ENCODE measurements at regions of chr19 and their contacts with region 1.

Region 1: GRCh38 chr19:40750059-40750873 is at the start of gene ACTMAP:
- DNase-seq: peak; percentile 99
- ATAC-seq: peak; percentile 88
- H3K4me3 ChIP-seq: peak within 1 kb of the TSS; percentile 95
- H3K27ac ChIP-seq: peak within 1 kb of the TSS; percentile 93
- H3K4me1 ChIP-seq: peaks cover 28% of the 10 kb centered on the region
- H3K27me3 ChIP-seq: no peaks in the 10 kb centered on the region
- CTCF ChIP-seq: no peak
- total RNA-seq, gene ACTMAP: 0.40 and 0.86 TPM in 2 replicates

Region 2: GRCh38 chr19:40716655-40717324 is 33.5 kb before region 1 on chr19 and contains the starts of genes COQ8B and ITPKC:
- CTCF ChIA-PET with region 1: interaction called, 6 read pairs
- POLR2A ChIA-PET with region 1: no interaction called
- intact Hi-C with region 1: loop called (anchors 2 kb)
- DNase-seq: peak; percentile 97
- ATAC-seq: peak; percentile 37
- H3K4me3 ChIP-seq: peak within 1 kb of the TSS; percentile 99
- H3K27ac ChIP-seq: peak within 1 kb of the TSS; percentile 100
- H3K4me1 ChIP-seq: peaks cover 27% of the 10 kb centered on the region
- H3K27me3 ChIP-seq: no peaks in the 10 kb centered on the region
- CTCF ChIP-seq: no peak
- total RNA-seq, gene COQ8B: 17.2 and 19.5 TPM in 2 replicates
- total RNA-seq, gene ITPKC: 28.4 and 44.2 TPM in 2 replicates

Region 3: GRCh38 chr19:40777937-40778705 is 27.9 kb after region 1 on chr19 and contains the start of gene RAB4B:
- CTCF ChIA-PET with region 1: no interaction called
- POLR2A ChIA-PET with region 1: interaction called, 3 read pairs
- intact Hi-C with region 1: loop called (anchors 1 kb)
- DNase-seq: peak; percentile 98
- ATAC-seq: peak; percentile 88
- H3K4me3 ChIP-seq: peak within 1 kb of the TSS; percentile 74
- H3K27ac ChIP-seq: peak within 1 kb of the TSS; percentile 72
- H3K4me1 ChIP-seq: peaks cover 13% of the 10 kb centered on the region; the same call in 1 of the 2 replicates
- H3K27me3 ChIP-seq: no peaks in the 10 kb centered on the region
- CTCF ChIP-seq: no peak
- total RNA-seq, gene RAB4B: 7.4 and 13.9 TPM in 2 replicates

Region 4: GRCh38 chr19:40791349-40791748 is 41.1 kb after region 1 on chr19:
- CTCF ChIA-PET with region 1: no interaction called
- POLR2A ChIA-PET with region 1: interaction called, 20 read pairs
- intact Hi-C with region 1: no loop called
- DNase-seq: no peak
- ATAC-seq: no peak
- H3K4me3 ChIP-seq: no peak overlapping the region
- H3K27ac ChIP-seq: no peak overlapping the region
- H3K4me1 ChIP-seq: no peaks in the 10 kb centered on the region
- H3K27me3 ChIP-seq: no peaks in the 10 kb centered on the region
- CTCF ChIP-seq: no peak

Region 5: GRCh38 chr19:41217741-41218140 is 467.5 kb after region 1 on chr19:
- CTCF ChIA-PET with region 1: no interaction called
- POLR2A ChIA-PET with region 1: interaction called, 12 read pairs
- intact Hi-C with region 1: no loop called
- DNase-seq: no peak
- ATAC-seq: no peak
- H3K4me3 ChIP-seq: no peak overlapping the region
- H3K27ac ChIP-seq: no peak overlapping the region
- H3K4me1 ChIP-seq: peaks cover 23% of the 10 kb centered on the region
- H3K27me3 ChIP-seq: no peaks in the 10 kb centered on the region
- CTCF ChIP-seq: no peak

Measured in PC-3 (cell line).